CD8-positive, alpha-beta T cell (primary cell): ENCODE measurements at regions of chr3 and their contacts with region 1.

Region 1: GRCh38 chr3:98602078-98602678 is 8.8 kb upstream of the CPOX start:
- DNase-seq: peak in 2 of 9 experiments; percentile 29 to 52
- ATAC-seq: peak; percentile 56
- H3K4me3 ChIP-seq: no peak overlapping the region
- H3K4me3 Mint-ChIP-seq: no peak overlapping the region
- H3K27ac ChIP-seq: no peak overlapping the region
- H3K27ac Mint-ChIP-seq: no peak overlapping the region
- H3K4me1 ChIP-seq: no peaks in the 10 kb centered on the region
- H3K4me1 Mint-ChIP-seq: no peaks in the 10 kb centered on the region
- H3K27me3 ChIP-seq: peaks cover 0 to 6% of the 10 kb centered on the region in 2 experiments
- H3K27me3 Mint-ChIP-seq: peaks cover 14% of the 10 kb centered on the region
- CTCF ChIP-seq: peak; percentile 72

Region 2: DNA sequence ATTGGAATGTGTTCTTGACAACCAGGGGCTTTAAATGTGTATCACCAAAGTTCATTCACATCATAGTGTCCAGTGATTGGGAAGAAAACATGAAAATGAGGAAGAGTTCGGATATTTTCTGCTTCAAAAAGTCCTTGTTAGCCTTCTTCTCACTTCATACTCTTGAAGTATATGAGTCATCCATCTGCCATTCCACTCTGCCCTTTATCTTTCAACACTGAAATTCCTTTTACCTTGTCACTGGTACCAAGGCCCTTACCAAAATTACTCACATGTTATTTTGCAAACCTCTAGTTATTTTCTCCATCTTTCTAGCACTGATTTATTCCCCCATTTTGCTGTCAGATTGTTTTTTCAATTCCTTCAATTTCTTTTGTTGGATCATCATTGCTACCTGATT is 403.2 kb before region 1 on chr3:
- CTCF ChIA-PET with region 1: no interaction called
- POLR2A ChIA-PET with region 1: no interaction called
- intact Hi-C with region 1: no loop called
- DNase-seq: no peak
- ATAC-seq: no peak
- H3K4me3 ChIP-seq: no peak overlapping the region
- H3K4me3 Mint-ChIP-seq: no peak overlapping the region
- H3K27ac ChIP-seq: no peak overlapping the region
- H3K27ac Mint-ChIP-seq: no peak overlapping the region
- H3K4me1 ChIP-seq: no peaks in the 10 kb centered on the region
- H3K4me1 Mint-ChIP-seq: no peaks in the 10 kb centered on the region
- H3K27me3 ChIP-seq: no peaks in the 10 kb centered on the region
- H3K27me3 Mint-ChIP-seq: peaks cover 8% of the 10 kb centered on the region
- CTCF ChIP-seq: no peak

Region 3: DNA sequence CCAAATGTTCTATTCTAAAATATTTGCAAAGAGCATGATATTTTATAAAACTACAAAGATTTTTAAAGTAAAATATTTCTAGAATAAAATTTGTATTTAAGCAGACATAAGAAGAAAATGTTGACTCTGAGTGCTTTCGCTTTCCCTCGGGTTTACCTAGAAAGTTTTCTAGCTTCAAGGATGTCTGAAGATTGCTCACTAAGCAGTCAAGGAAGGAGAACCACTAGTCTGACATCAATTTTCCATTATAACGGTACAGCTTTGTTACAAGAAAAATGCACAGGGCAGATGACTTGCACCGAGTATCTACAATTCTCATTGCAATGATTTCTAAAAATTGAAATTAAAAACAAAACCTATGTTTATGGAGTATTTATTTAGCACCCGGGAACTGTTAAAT is 56.2 kb before region 1 on chr3:
- CTCF ChIA-PET with region 1: no interaction called
- POLR2A ChIA-PET with region 1: no interaction called
- intact Hi-C with region 1: no loop called
- DNase-seq: peak in 1 of 9 experiments; percentile 48
- ATAC-seq: peak; percentile 42
- H3K4me3 ChIP-seq: no peak overlapping the region
- H3K4me3 Mint-ChIP-seq: peak overlapping the region; percentile 52
- H3K27ac ChIP-seq: no peak overlapping the region
- H3K27ac Mint-ChIP-seq: no peak overlapping the region
- H3K4me1 ChIP-seq: no peaks in the 10 kb centered on the region
- H3K4me1 Mint-ChIP-seq: peaks cover 19% of the 10 kb centered on the region
- H3K27me3 ChIP-seq: peaks cover 0 to 2% of the 10 kb centered on the region in 2 experiments
- H3K27me3 Mint-ChIP-seq: no peaks in the 10 kb centered on the region
- CTCF ChIP-seq: no peak

Region 4: GRCh38 chr3:98630416-98630815 is 28.2 kb after region 1 on chr3:
- CTCF ChIA-PET with region 1: interaction called, 6 read pairs
- POLR2A ChIA-PET with region 1: no interaction called
- intact Hi-C with region 1: loop called in 1 of 2 experiments (anchors 1 kb)
- DNase-seq: no peak
- ATAC-seq: no peak
- H3K4me3 ChIP-seq: no peak overlapping the region
- H3K4me3 Mint-ChIP-seq: no peak overlapping the region
- H3K27ac ChIP-seq: no peak overlapping the region
- H3K27ac Mint-ChIP-seq: no peak overlapping the region
- H3K4me1 ChIP-seq: no peaks in the 10 kb centered on the region
- H3K4me1 Mint-ChIP-seq: no peaks in the 10 kb centered on the region
- H3K27me3 ChIP-seq: no peaks in the 10 kb centered on the region
- H3K27me3 Mint-ChIP-seq: no peaks in the 10 kb centered on the region
- CTCF ChIP-seq: no peak

Region 5: DNA sequence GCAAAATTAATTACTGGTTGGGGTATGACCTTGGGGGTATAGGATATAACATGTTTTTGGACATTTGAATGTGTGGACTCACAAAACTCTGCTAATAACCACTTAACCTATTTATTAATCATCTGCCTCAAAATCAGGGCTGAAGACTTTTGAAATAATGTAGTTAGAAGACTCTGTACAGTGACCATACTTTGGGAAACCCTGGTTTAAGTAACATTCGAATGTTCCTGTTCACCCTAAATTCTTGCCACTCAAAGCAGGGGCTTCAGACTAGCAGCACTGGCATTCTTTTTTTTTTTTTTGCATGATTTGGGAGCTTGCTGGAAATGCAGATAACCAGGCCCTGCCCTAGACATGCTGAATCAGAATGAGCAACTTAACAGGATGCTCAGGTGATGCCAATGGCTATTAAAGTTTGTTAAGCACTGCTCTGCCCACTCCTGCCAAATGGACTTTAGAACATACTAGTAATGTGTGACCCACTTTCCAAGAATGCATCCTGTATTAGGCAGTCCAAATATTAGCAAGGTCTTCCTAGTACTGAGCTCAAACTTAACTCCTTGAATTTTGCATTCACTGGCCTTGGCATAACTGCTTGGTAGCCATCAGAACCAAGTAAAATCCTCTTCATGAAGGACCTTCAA is 148.2 kb after region 1 on chr3:
- CTCF ChIA-PET with region 1: no interaction called
- POLR2A ChIA-PET with region 1: no interaction called
- intact Hi-C with region 1: no loop called
- DNase-seq: no peak
- ATAC-seq: no peak
- H3K4me3 ChIP-seq: no peak overlapping the region
- H3K4me3 Mint-ChIP-seq: no peak overlapping the region
- H3K27ac ChIP-seq: no peak overlapping the region
- H3K27ac Mint-ChIP-seq: no peak overlapping the region
- H3K4me1 ChIP-seq: no peaks in the 10 kb centered on the region
- H3K4me1 Mint-ChIP-seq: no peaks in the 10 kb centered on the region
- H3K27me3 ChIP-seq: no peaks in the 10 kb centered on the region
- H3K27me3 Mint-ChIP-seq: peaks cover 10% of the 10 kb centered on the region
- CTCF ChIP-seq: no peak

Region 6: GRCh38 chr3:98806541-98806941 is 204.4 kb after region 1 on chr3:
- CTCF ChIA-PET with region 1: no interaction called
- POLR2A ChIA-PET with region 1: no interaction called
- intact Hi-C with region 1: no loop called
- DNase-seq: no peak
- ATAC-seq: no peak
- H3K4me3 ChIP-seq: no peak overlapping the region
- H3K4me3 Mint-ChIP-seq: no peak overlapping the region
- H3K27ac ChIP-seq: no peak overlapping the region
- H3K27ac Mint-ChIP-seq: no peak overlapping the region
- H3K4me1 ChIP-seq: no peaks in the 10 kb centered on the region
- H3K4me1 Mint-ChIP-seq: no peaks in the 10 kb centered on the region
- H3K27me3 ChIP-seq: no peaks in the 10 kb centered on the region
- H3K27me3 Mint-ChIP-seq: no peaks in the 10 kb centered on the region
- CTCF ChIP-seq: no peak

Region 7: GRCh38 chr3:99753268-99753975 is 1151.2 kb after region 1 on chr3:
- CTCF ChIA-PET with region 1: interaction called, 4 read pairs
- POLR2A ChIA-PET with region 1: no interaction called
- intact Hi-C with region 1: loop called (anchors 5 kb)
- DNase-seq: peak in 2 of 9 experiments; percentile 29 to 49
- ATAC-seq: peak; percentile 48
- H3K4me3 ChIP-seq: no peak overlapping the region
- H3K4me3 Mint-ChIP-seq: no peak overlapping the region
- H3K27ac ChIP-seq: no peak overlapping the region
- H3K27ac Mint-ChIP-seq: no peak overlapping the region
- H3K4me1 ChIP-seq: no peaks in the 10 kb centered on the region
- H3K4me1 Mint-ChIP-seq: peaks cover 2% of the 10 kb centered on the region
- H3K27me3 ChIP-seq: no peaks in the 10 kb centered on the region
- H3K27me3 Mint-ChIP-seq: peaks cover 23% of the 10 kb centered on the region
- CTCF ChIP-seq: peak; percentile 40

Region 8: DNA sequence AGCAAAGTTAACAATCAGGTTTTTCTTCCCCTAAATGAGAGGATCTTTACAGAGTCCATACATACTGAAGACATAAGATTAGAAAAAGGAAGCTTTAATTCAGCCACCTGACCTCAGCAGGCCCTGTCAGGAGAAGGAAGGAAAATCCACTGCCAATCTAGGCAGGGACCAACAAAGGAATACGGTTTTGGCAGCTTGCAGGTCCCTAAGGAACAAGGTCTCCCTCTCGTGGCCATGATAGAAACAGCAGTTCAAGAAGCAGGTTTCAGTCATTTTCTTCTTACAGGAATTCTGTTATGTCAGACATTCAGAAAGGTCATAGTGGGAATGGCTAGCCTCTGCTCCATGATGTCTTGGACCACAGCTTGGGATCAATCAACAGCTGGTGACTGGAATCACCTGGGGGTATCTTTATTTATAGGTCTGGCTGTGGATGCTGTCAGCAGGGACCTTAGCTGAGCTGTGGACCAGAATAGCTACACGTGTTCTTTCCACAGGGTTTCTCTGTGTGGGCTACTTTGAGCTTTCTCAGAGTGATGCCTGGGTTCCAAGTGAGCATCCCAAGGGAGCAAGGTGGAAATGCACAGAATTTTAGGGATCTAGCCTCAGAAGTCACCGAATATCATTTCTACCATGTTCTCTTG is 1206.1 kb after region 1 on chr3:
- CTCF ChIA-PET with region 1: no interaction called
- POLR2A ChIA-PET with region 1: no interaction called
- intact Hi-C with region 1: loop called (anchors 5 to 10 kb)
- DNase-seq: peak in 6 of 9 experiments; percentile 10 to 72 (median 44)
- ATAC-seq: peak; percentile 72
- H3K4me3 ChIP-seq: no peak overlapping the region
- H3K4me3 Mint-ChIP-seq: no peak overlapping the region
- H3K27ac ChIP-seq: no peak overlapping the region
- H3K27ac Mint-ChIP-seq: no peak overlapping the region
- H3K4me1 ChIP-seq: no peaks in the 10 kb centered on the region
- H3K4me1 Mint-ChIP-seq: peaks cover 3% of the 10 kb centered on the region
- H3K27me3 ChIP-seq: no peaks in the 10 kb centered on the region
- H3K27me3 Mint-ChIP-seq: no peaks in the 10 kb centered on the region
- CTCF ChIP-seq: peak; percentile 76